Sciatic nerve (tissue), 2 donors: ENCODE measurements at regions of chr1 and their contacts with region 1.

Region 1: GRCh38 chr1:71473331-71473730 is 392.5 kb upstream of the ZRANB2 start:
- DNase-seq: no peak
- ATAC-seq: no peak

Region 2: GRCh38 chr1:71106658-71107322 is 366.5 kb before region 1 on chr1:
- intact Hi-C with region 1: loop called (anchors 5 kb)
- DNase-seq: no peak
- ATAC-seq: no peak

Region 3: GRCh38 chr1:71502006-71502405 is 28.7 kb after region 1 on chr1:
- intact Hi-C with region 1: no loop called
- DNase-seq: no peak
- ATAC-seq: no peak